CD4-positive, alpha-beta memory T cell (primary cell): ENCODE measurements at regions of chr7 and their contacts with region 1.

Region 1: GRCh38 chr7:33062782-33063443 is 337 bp upstream of the NT5C3A start:
- DNase-seq: peak; percentile 93 to 95 (median 94)
- H3K4me3 ChIP-seq: peak overlapping the region; percentile 75 to 98
- H3K4me3 Mint-ChIP-seq: peak overlapping the region; percentile 95 to 98 (median 96)
- H3K27ac ChIP-seq: peak overlapping the region; percentile 87
- H3K27ac Mint-ChIP-seq: peak overlapping the region; percentile 93 to 99 (median 96)
- H3K4me1 ChIP-seq: peaks cover 40% of the 10 kb centered on the region
- H3K4me1 Mint-ChIP-seq: peaks cover 29 to 48% (median 35%) of the 10 kb centered on the region in 4 donors
- H3K27me3 ChIP-seq: no peaks in the 10 kb centered on the region
- H3K27me3 Mint-ChIP-seq: peaks cover 1 to 2% of the 10 kb centered on the region in 2 donors

Region 2: GRCh38 chr7:32490127-32490822 is 572.6 kb before region 1 on chr7 and contains the start of gene LSM5:
- CTCF ChIA-PET with region 1: no interaction called
- POLR2A ChIA-PET with region 1: interaction called, 6 read pairs
- intact Hi-C with region 1: loop called (anchors 2 kb)
- DNase-seq: peak; percentile 89 to 92 (median 90)
- H3K4me3 ChIP-seq: peak within 1 kb of the TSS; percentile 67 to 96
- H3K4me3 Mint-ChIP-seq: peak within 1 kb of the TSS; percentile 82 to 96 (median 92)
- H3K27ac ChIP-seq: peak within 1 kb of the TSS; percentile 79
- H3K27ac Mint-ChIP-seq: peak within 1 kb of the TSS; percentile 92 to 97 (median 94)
- H3K4me1 ChIP-seq: peaks cover 27% of the 10 kb centered on the region
- H3K4me1 Mint-ChIP-seq: peaks cover 7 to 30% (median 22%) of the 10 kb centered on the region in 4 donors
- H3K27me3 ChIP-seq: no peaks in the 10 kb centered on the region
- H3K27me3 Mint-ChIP-seq: no peaks in the 10 kb centered on the region
- total RNA-seq, gene LSM5: 37.6 to 37.8 TPM

Region 3: DNA sequence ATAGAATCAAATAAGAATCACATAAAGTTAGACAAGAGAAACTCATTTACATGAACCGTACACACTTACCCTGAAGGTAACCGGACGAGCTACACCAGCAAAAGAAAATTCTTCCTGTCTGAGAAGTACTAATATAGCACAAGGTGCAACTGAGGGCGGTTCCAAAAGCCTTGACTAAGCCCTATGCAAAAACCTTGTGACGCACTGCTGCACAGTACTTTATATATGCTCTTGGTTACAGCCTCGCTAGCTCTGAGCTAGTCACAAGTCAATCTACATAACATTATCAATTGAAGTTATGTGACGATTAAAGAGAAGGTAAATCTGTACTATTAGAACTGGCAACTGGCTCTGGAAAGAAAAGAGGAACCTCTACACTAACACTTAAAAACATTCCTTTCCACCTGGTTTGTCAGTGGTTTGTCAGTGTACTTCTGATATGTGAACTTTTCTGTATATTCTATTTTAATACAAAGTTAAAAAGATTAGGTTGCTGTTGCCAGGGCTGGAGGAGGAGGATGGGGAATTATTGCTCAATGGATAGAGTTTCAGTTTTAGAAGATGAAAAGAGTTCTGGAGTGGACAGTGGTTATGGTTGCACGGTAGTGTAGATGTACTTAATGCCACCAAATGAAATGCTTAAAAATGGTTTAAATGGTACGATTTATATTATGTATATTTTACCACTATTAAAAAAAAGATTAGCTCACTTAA is 22.0 kb before region 1 on chr7:
- CTCF ChIA-PET with region 1: interaction called, 17 read pairs
- POLR2A ChIA-PET with region 1: interaction called, 70 read pairs
- intact Hi-C with region 1: loop called (anchors 1 kb)
- DNase-seq: peak; percentile 70 to 90 (median 81)
- H3K4me3 ChIP-seq: peak overlapping the region; percentile 6 to 52
- H3K4me3 Mint-ChIP-seq: peak overlapping the region; percentile 75 to 92 (median 84)
- H3K27ac ChIP-seq: peak overlapping the region; percentile 64
- H3K27ac Mint-ChIP-seq: peak overlapping the region; percentile 88 to 97 (median 94)
- H3K4me1 ChIP-seq: peaks cover 72% of the 10 kb centered on the region
- H3K4me1 Mint-ChIP-seq: peaks cover 34 to 71% (median 53%) of the 10 kb centered on the region in 4 donors
- H3K27me3 ChIP-seq: no peaks in the 10 kb centered on the region
- H3K27me3 Mint-ChIP-seq: no peaks in the 10 kb centered on the region

Region 4: DNA sequence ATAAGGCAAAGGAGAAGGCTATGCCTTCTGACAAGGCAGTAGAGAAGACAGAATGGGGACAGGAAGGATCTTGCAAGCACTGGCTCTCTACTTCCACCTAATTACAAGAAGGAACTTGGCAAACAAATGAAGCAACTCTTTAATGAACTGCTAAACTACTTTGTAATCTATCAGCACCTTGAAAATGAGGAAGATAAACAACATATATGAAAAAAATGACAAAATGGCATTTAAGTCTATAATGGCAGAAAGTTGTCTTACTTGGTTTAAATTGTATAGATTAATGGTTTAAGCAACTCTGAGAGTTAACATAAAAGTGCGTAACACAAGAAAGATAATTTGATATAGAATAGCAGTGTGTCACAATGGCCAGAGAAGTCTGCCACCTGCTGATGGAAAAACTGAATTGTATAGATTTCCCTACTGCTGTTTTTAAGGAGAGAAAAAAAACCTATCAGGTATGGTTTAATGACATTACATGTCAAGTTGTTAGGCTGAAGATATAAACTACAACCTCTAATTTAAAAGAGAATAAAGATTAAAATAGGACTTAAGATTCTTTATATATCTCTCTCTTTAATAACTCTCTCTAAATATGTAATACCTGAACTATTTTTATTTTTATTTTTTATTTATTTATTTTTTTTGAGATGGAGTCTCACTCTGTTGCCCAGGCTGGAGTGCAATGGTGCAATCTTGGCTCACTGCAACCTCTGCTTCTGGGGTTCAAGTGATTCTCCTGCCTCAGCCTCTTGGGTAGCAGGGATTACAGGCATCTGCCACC is 12.2 kb before region 1 on chr7:
- CTCF ChIA-PET with region 1: interaction called, 22 read pairs
- POLR2A ChIA-PET with region 1: interaction called, 29 read pairs
- intact Hi-C with region 1: loop called (anchors 1 kb)
- DNase-seq: peak; percentile 41 to 61 (median 55)
- H3K4me3 ChIP-seq: no peak overlapping the region
- H3K4me3 Mint-ChIP-seq: peak overlapping the region in 1 of 8 donors; percentile 1
- H3K27ac ChIP-seq: no peak overlapping the region
- H3K27ac Mint-ChIP-seq: peak overlapping the region in 4 of 7 donors; percentile 10 to 39 (median 29)
- H3K4me1 ChIP-seq: peaks cover 50% of the 10 kb centered on the region
- H3K4me1 Mint-ChIP-seq: peaks cover 28 to 70% (median 47%) of the 10 kb centered on the region in 4 donors
- H3K27me3 ChIP-seq: no peaks in the 10 kb centered on the region
- H3K27me3 Mint-ChIP-seq: no peaks in the 10 kb centered on the region

Region 5: GRCh38 chr7:33128990-33129805 is 66.3 kb after region 1 on chr7 and contains the start of gene BBS9:
- CTCF ChIA-PET with region 1: interaction called, 4 read pairs
- POLR2A ChIA-PET with region 1: interaction called, 4 read pairs
- intact Hi-C with region 1: loop called (anchors 1 kb)
- DNase-seq: peak; percentile 89 to 93 (median 90)
- H3K4me3 ChIP-seq: peak within 1 kb of the TSS; percentile 74 to 81
- H3K4me3 Mint-ChIP-seq: peak within 1 kb of the TSS; percentile 96 to 98 (median 97)
- H3K27ac ChIP-seq: peak within 1 kb of the TSS; percentile 66
- H3K27ac Mint-ChIP-seq: peak within 1 kb of the TSS; percentile 88 to 97 (median 96)
- H3K4me1 ChIP-seq: peaks cover 15% of the 10 kb centered on the region
- H3K4me1 Mint-ChIP-seq: peaks cover 14 to 27% (median 15%) of the 10 kb centered on the region in 4 donors
- H3K27me3 ChIP-seq: no peaks in the 10 kb centered on the region
- H3K27me3 Mint-ChIP-seq: peaks cover 0 to 4% of the 10 kb centered on the region in 2 donors
- total RNA-seq, gene BBS9: 27.0 to 27.3 TPM